HepG2 (cell line): ENCODE measurements at regions of chr3 and their contacts with region 1.

Region 1: GRCh38 chr3:156535162-156535627 is 19.7 kb downstream of the SSR3 start:
- DNase-seq: peak; percentile 96
- ATAC-seq: peak; percentile 90
- H3K4me3 ChIP-seq: peak overlapping the region in 1 of 3 experiments; percentile 19; a peak in 1 of 6 replicates
- H3K27ac ChIP-seq: peak overlapping the region; percentile 62
- H3K4me1 ChIP-seq: peaks cover 57% of the 10 kb centered on the region
- H3K27me3 ChIP-seq: no peaks in the 10 kb centered on the region
- CTCF ChIP-seq: peak; percentile 75
- EP300 ChIP-seq: peak; percentile 34 to 49; a peak in 3 of 4 replicates
- POLR2A ChIP-seq: peak; percentile 13 to 39; a peak in 1 of 4 replicates
- RAD21 ChIP-seq: peak; percentile 67

Region 2: GRCh38 chr3:156509189-156510174 is 25.7 kb before region 1 on chr3:
- CTCF ChIA-PET with region 1: no interaction called
- POLR2A ChIA-PET with region 1: no interaction called
- in situ Hi-C with region 1: no loop called
- intact Hi-C with region 1: loop called (anchors 2 kb)
- DNase-seq: peak; percentile 18
- ATAC-seq: peak; percentile 71
- H3K4me3 ChIP-seq: no peak overlapping the region
- H3K27ac ChIP-seq: no peak overlapping the region
- H3K4me1 ChIP-seq: peaks cover 11% of the 10 kb centered on the region
- H3K27me3 ChIP-seq: no peaks in the 10 kb centered on the region
- CTCF ChIP-seq: peak; percentile 63
- EP300 ChIP-seq: no peak
- POLR2A ChIP-seq: no peak
- RAD21 ChIP-seq: no peak

Region 3: DNA sequence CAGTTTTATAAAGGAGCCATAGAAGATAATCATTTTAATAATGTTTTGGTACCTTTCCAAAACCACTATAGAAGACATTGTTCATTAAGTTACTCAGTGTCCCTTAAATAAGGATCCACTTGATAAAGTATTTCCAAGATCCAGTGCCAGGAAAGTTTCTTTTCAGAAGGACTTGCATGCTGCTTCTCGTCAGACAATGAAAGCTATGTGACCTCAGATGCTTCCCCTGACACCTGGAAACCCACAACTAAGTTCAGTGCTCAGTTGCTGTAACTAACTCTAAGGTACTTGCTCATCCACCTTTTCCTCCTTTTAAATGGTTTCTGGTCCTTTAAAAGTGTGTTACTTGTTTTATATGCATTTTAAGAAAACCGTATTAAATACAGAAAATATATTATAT is 12.4 kb after region 1 on chr3:
- CTCF ChIA-PET with region 1: no interaction called
- POLR2A ChIA-PET with region 1: no interaction called
- in situ Hi-C with region 1: no loop called
- intact Hi-C with region 1: loop called (anchors 2 kb)
- DNase-seq: no peak
- ATAC-seq: no peak
- H3K4me3 ChIP-seq: no peak overlapping the region
- H3K27ac ChIP-seq: no peak overlapping the region
- H3K4me1 ChIP-seq: peaks cover 70% of the 10 kb centered on the region
- H3K27me3 ChIP-seq: no peaks in the 10 kb centered on the region; a peak in 1 of 5 replicates
- CTCF ChIP-seq: no peak
- EP300 ChIP-seq: no peak
- POLR2A ChIP-seq: no peak
- RAD21 ChIP-seq: no peak

Region 4: GRCh38 chr3:156674046-156674910 is 139.1 kb after region 1 on chr3 and contains the start of gene TIPARP:
- CTCF ChIA-PET with region 1: no interaction called
- POLR2A ChIA-PET with region 1: interaction called, 10 read pairs
- in situ Hi-C with region 1: no loop called
- intact Hi-C with region 1: loop called (anchors 1 kb)
- DNase-seq: peak; percentile 92
- ATAC-seq: peak; percentile 92
- H3K4me3 ChIP-seq: peak within 1 kb of the TSS; percentile 76 to 96 (median 82)
- H3K27ac ChIP-seq: peak within 1 kb of the TSS; percentile 89
- H3K4me1 ChIP-seq: peaks cover 44% of the 10 kb centered on the region
- H3K27me3 ChIP-seq: no peaks in the 10 kb centered on the region
- CTCF ChIP-seq: peak; percentile 90
- EP300 ChIP-seq: peak in 1 of 2 experiments; percentile 14; a peak in 1 of 4 replicates
- POLR2A ChIP-seq: peak; percentile 98 to 99
- RAD21 ChIP-seq: peak; percentile 92
- total RNA-seq, gene TIPARP: 19.7 and 25.4 TPM in 2 replicates

Region 5: GRCh38 chr3:157159762-157160657 is 624.8 kb after region 1 on chr3 and contains the start of gene CCNL1:
- CTCF ChIA-PET with region 1: no interaction called
- POLR2A ChIA-PET with region 1: interaction called, 12 read pairs
- in situ Hi-C with region 1: no loop called
- intact Hi-C with region 1: no loop called
- DNase-seq: peak; percentile 88
- ATAC-seq: peak; percentile 87
- H3K4me3 ChIP-seq: peak within 1 kb of the TSS; percentile 94 to 99 (median 98)
- H3K27ac ChIP-seq: peak within 1 kb of the TSS; percentile 100
- H3K4me1 ChIP-seq: peaks cover 64% of the 10 kb centered on the region
- H3K27me3 ChIP-seq: no peaks in the 10 kb centered on the region
- CTCF ChIP-seq: 0 out of 2 replicates have a peak, but pooled peaks have one; percentile 15
- EP300 ChIP-seq: peak; percentile 58 to 70; a peak in 3 of 4 replicates
- POLR2A ChIP-seq: peak; percentile 97 to 99
- RAD21 ChIP-seq: peak; percentile 64
- total RNA-seq, gene CCNL1: 23.5 and 151 TPM in 2 replicates